ENCODE measurements at regions of chr2 and their contacts with region 1.

Region 1: DNA sequence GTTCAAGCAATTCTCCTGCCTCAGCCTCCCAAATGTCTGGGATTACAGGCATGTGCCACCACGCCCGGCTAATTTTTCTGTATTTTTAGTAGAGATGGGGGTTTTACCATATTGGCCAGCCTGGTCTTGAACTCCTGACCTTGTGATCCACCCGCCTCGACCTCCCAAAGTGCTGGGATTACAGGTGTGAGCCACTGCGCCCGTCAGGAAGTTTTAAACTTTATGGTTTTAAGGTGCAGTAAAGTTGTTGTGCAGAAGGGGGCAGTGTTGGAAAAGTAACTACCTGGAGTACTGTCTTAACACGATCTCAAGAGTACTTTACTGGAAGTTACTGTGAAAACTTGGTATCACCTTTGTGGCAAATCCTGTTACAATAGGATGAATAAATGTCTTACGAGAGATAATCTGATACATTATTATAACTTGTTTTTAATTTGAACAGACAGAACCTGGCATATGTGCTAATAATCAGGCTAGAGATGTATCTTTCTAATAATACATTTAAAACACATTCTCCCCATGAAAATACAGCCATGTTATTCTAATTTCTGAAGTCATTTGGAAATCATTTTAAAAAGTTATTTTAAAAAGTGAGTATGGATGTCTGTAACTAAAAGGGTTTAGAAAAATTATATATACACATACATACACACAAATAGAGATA is 10.8 kb downstream of the SPDYA start:
- DNase-seq: peak; percentile 67
- ATAC-seq: peak; percentile 91
- H3K4me3 ChIP-seq: no peak overlapping the region
- H3K27ac ChIP-seq: no peak overlapping the region
- H3K4me1 ChIP-seq: no peaks in the 10 kb centered on the region; the same call in 1 of the 2 replicates
- H3K27me3 ChIP-seq: no peaks in the 10 kb centered on the region
- CTCF ChIP-seq: peak; percentile 90
- EP300 ChIP-seq: no peak
- POLR2A ChIP-seq: no peak
- RAD21 ChIP-seq: peak; percentile 62

Region 2: DNA sequence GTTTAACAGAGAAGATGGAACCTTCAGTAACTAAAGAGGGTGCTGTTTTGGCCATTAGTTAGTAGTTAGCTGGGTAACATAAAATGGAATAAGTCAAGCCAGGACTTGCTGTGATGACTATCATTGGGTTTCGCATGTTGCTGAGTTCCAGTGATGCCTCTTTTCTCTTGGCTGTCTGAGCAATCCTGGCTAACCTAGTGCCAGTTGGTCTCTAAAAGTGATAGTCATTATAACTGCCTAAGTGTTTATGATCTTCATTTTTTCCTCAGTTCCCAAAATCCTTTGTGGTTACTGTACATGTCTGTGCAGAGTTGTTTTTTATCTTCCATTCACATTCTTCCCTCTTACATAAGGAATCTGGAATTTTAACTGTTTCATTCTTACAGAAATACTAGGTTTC is 106.5 kb after region 1 on chr2:
- CTCF ChIA-PET with region 1: no interaction called
- POLR2A ChIA-PET with region 1: no interaction called
- in situ Hi-C with region 1: no loop called
- intact Hi-C with region 1: loop called (anchors 10 kb)
- DNase-seq: no peak
- ATAC-seq: no peak
- H3K4me3 ChIP-seq: no peak overlapping the region
- H3K27ac ChIP-seq: no peak overlapping the region
- H3K4me1 ChIP-seq: no peaks in the 10 kb centered on the region
- H3K27me3 ChIP-seq: no peaks in the 10 kb centered on the region
- CTCF ChIP-seq: no peak
- EP300 ChIP-seq: no peak
- POLR2A ChIP-seq: no peak
- RAD21 ChIP-seq: no peak

Region 3: GRCh38 chr2:28949617-28950305 is 128.3 kb after region 1 on chr2:
- CTCF ChIA-PET with region 1: no interaction called
- POLR2A ChIA-PET with region 1: no interaction called
- in situ Hi-C with region 1: loop called (anchors 10 kb)
- intact Hi-C with region 1: no loop called
- DNase-seq: peak; percentile 29
- ATAC-seq: peak; percentile 2; the same call in 2 of the 3 replicates
- H3K4me3 ChIP-seq: no peak overlapping the region
- H3K27ac ChIP-seq: no peak overlapping the region
- H3K4me1 ChIP-seq: peaks cover 22% of the 10 kb centered on the region
- H3K27me3 ChIP-seq: no peaks in the 10 kb centered on the region
- CTCF ChIP-seq: no peak
- EP300 ChIP-seq: no peak
- POLR2A ChIP-seq: peak in 1 of 2 experiments; percentile 8; a peak in 1 of 4 replicates
- RAD21 ChIP-seq: 0 out of 2 replicates have a peak, but pooled peaks have one; percentile 7

Region 4: GRCh38 chr2:29196792-29197788 is 375.7 kb after region 1 on chr2:
- CTCF ChIA-PET with region 1: interaction called, 15 read pairs
- POLR2A ChIA-PET with region 1: no interaction called
- in situ Hi-C with region 1: loop called (anchors 10 kb)
- intact Hi-C with region 1: loop called (anchors 1 kb)
- DNase-seq: peak; percentile 69
- ATAC-seq: peak; percentile 99
- H3K4me3 ChIP-seq: no peak overlapping the region
- H3K27ac ChIP-seq: no peak overlapping the region
- H3K4me1 ChIP-seq: no peaks in the 10 kb centered on the region
- H3K27me3 ChIP-seq: peaks cover 0 to 16% of the 10 kb centered on the region in 2 experiments; a peak in 3 of 5 replicates
- CTCF ChIP-seq: peak; percentile 94
- EP300 ChIP-seq: no peak
- POLR2A ChIP-seq: no peak
- RAD21 ChIP-seq: peak; percentile 93

Region 5: DNA sequence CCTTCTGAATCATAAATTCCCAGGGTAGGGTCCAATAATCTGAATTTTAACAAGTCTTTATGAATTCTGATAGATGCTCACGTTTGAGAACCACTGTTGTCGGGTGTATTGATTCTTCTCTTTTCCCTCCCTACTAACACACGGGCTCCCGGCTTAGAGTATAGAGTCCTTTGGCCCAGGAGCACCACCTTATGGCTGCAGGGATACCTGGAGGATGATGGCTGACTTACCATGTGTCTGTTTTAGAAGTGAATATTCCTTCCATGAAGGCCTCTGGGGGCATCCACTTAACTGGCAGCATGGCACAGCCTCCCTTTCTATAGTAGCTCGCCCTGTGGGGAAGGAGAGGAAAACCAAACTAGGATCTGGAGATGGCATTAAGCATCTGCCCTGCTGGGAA is 385.5 kb after region 1 on chr2:
- CTCF ChIA-PET with region 1: no interaction called
- POLR2A ChIA-PET with region 1: no interaction called
- in situ Hi-C with region 1: loop called (anchors 10 kb)
- intact Hi-C with region 1: no loop called
- DNase-seq: peak; percentile 12
- ATAC-seq: peak; percentile 83
- H3K4me3 ChIP-seq: no peak overlapping the region
- H3K27ac ChIP-seq: no peak overlapping the region
- H3K4me1 ChIP-seq: no peaks in the 10 kb centered on the region
- H3K27me3 ChIP-seq: peaks cover 0 to 39% of the 10 kb centered on the region in 2 experiments; a peak in 3 of 5 replicates
- CTCF ChIP-seq: 0 out of 2 replicates have a peak, but pooled peaks have one; percentile 16
- EP300 ChIP-seq: no peak
- POLR2A ChIP-seq: no peak
- RAD21 ChIP-seq: no peak